ENCODE measurements at regions of chr1 and their contacts with region 1.

Region 1: GRCh38 chr1:109643385-109644230 is 12.3 kb upstream of the GSTM4 start:
- DNase-seq: peak; percentile 83 to 90
- ATAC-seq: peak; percentile 91 to 94 (median 93)
- H3K4me3 ChIP-seq: no peak overlapping the region
- H3K4me3 Mint-ChIP-seq: no peak overlapping the region
- H3K27ac ChIP-seq: no peak overlapping the region
- H3K27ac Mint-ChIP-seq: peak overlapping the region in 1 of 2 donors; percentile 20
- H3K4me1 ChIP-seq: peaks cover 15% of the 10 kb centered on the region
- H3K4me1 Mint-ChIP-seq: peaks cover 4 to 10% of the 10 kb centered on the region in 2 donors
- H3K27me3 ChIP-seq: no peaks in the 10 kb centered on the region
- H3K27me3 Mint-ChIP-seq: peaks cover 0 to 3% of the 10 kb centered on the region in 2 donors
- CTCF ChIP-seq: peak; percentile 88

Region 2: DNA sequence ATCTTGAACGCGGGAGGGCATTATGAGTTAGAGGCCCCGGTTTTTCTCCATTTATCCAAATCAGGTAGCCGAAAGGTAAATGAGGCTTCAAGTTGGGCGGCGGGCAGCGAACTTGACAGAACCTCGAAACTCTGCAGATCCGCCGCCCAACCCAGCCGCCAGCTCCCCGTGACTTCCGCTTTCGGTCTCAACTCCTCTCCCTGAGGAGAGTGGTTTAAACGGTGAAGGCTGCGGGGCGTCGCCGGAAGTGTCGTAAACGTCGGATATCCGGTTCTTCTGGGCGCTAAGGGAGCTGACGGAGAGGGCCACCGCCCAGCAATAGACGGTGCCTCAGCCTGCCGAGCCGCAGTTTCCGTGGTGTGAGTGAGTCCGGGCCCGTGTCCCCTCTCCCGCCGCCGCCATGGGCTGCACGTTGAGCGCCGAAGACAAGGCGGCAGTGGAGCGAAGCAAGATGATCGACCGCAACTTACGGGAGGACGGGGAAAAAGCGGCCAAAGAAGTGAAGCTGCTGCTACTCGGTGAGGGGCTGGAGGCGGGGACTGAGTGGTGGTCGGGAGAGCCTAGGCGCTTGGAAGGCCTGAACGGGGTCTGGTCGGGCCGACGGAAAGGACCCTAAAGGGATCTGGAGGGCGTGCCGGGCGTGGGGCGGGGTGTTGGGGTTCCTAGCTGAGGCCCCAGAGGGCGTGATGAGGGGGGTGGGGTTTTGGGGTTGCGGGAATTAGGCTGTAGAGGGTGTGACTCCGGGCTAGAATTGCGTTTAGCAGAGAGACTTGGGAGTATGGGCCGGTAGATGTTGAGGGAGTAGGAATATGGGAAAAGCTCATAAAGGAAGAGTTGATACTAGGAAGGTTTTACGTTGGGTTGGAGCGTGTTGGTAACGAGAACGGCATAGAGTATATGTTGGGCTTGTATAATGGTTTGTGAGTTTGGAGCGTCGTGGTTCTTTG is 95.0 kb before region 1 on chr1 and contains the start of gene GNAI3:
- intact Hi-C with region 1: loop called (anchors 2 kb)
- DNase-seq: peak; percentile 91 to 98
- ATAC-seq: peak; percentile 88 to 98 (median 93)
- H3K4me3 ChIP-seq: peak within 1 kb of the TSS; percentile 89
- H3K4me3 Mint-ChIP-seq: peak within 1 kb of the TSS; percentile 94
- H3K27ac ChIP-seq: peak within 1 kb of the TSS; percentile 94
- H3K27ac Mint-ChIP-seq: peak within 1 kb of the TSS; percentile 91 to 98
- H3K4me1 ChIP-seq: peaks cover 5% of the 10 kb centered on the region
- H3K4me1 Mint-ChIP-seq: peaks cover 41 to 56% of the 10 kb centered on the region in 2 donors
- H3K27me3 ChIP-seq: no peaks in the 10 kb centered on the region
- H3K27me3 Mint-ChIP-seq: no peaks in the 10 kb centered on the region
- CTCF ChIP-seq: no peak
- total RNA-seq, gene GNAI3: 6.1 to 7.6 (median 6.9) TPM

Region 3: DNA sequence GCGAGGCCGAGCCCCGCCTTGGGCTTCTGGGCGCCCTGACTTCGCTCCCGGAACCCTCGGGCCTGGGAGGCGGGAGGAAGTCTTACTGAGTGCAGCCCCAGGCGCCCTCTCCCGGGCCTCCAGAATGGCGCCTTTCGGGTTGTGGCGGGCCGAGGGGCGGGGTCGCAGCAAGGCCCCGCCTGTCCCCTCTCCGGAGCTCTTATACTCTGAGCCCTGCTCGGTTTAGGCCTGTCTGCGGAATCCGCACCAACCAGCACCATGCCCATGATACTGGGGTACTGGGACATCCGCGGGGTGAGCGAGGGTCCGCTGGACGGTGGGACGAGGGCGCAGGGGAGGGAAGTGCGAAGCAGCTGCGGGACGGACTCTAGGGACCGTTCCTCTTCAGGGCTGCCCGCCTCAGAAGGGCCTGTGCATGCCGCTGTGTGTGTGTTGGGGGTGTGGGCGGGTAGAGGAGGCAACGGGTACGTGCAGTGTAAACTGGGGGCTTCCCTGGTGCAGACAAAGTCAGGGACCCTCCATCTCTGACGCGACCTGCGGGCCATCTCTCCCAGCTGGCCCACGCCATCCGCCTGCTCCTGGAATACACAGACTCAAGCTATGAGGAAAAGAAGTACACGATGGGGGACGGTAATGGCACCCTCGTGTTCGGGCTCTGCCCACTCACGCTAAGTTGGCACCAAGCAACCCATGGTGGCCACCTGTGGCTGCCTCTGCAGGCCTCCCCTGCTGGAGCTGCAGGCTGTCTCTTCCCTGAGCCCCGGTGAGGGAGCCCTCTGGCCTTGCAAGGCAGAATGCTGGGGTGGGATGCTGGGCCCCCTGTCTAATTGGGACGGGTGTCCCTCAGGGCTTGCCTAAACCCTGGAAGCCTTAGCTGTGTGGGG is 44.2 kb after region 1 on chr1 and contains the start of gene GSTM1:
- intact Hi-C with region 1: loop called (anchors 2 kb)
- DNase-seq: peak; percentile 79 to 83
- ATAC-seq: peak in 2 of 3 donors; percentile 99
- H3K4me3 ChIP-seq: no peak within 1 kb of the TSS
- H3K4me3 Mint-ChIP-seq: no peak within 1 kb of the TSS
- H3K27ac ChIP-seq: no peak within 1 kb of the TSS
- H3K27ac Mint-ChIP-seq: peak within 1 kb of the TSS in 1 of 2 donors; percentile 92
- H3K4me1 ChIP-seq: peaks cover 9% of the 10 kb centered on the region
- H3K4me1 Mint-ChIP-seq: peaks cover 0 to 17% of the 10 kb centered on the region in 2 donors
- H3K27me3 ChIP-seq: no peaks in the 10 kb centered on the region
- H3K27me3 Mint-ChIP-seq: no peaks in the 10 kb centered on the region
- CTCF ChIP-seq: peak; percentile 50
- total RNA-seq, gene GSTM1: 31.9 to 34.7 TPM in 2 of 3 donors, not detected in the other

Region 4: GRCh38 chr1:109773146-109773899 is 129.7 kb after region 1 on chr1:
- intact Hi-C with region 1: loop called (anchors 1 kb)
- DNase-seq: peak in 1 of 2 donors; percentile 85
- ATAC-seq: peak; percentile 75 to 79 (median 76)
- H3K4me3 ChIP-seq: no peak overlapping the region
- H3K4me3 Mint-ChIP-seq: no peak overlapping the region
- H3K27ac ChIP-seq: no peak overlapping the region
- H3K27ac Mint-ChIP-seq: no peak overlapping the region
- H3K4me1 ChIP-seq: peaks cover 5% of the 10 kb centered on the region
- H3K4me1 Mint-ChIP-seq: peaks cover 0 to 8% of the 10 kb centered on the region in 2 donors
- H3K27me3 ChIP-seq: no peaks in the 10 kb centered on the region
- H3K27me3 Mint-ChIP-seq: peaks cover 23 to 27% of the 10 kb centered on the region in 2 donors
- CTCF ChIP-seq: peak; percentile 30

Measured in natural killer cell (primary cell).